ENCODE measurements at regions of chr10 and their contacts with region 1.

Region 1: DNA sequence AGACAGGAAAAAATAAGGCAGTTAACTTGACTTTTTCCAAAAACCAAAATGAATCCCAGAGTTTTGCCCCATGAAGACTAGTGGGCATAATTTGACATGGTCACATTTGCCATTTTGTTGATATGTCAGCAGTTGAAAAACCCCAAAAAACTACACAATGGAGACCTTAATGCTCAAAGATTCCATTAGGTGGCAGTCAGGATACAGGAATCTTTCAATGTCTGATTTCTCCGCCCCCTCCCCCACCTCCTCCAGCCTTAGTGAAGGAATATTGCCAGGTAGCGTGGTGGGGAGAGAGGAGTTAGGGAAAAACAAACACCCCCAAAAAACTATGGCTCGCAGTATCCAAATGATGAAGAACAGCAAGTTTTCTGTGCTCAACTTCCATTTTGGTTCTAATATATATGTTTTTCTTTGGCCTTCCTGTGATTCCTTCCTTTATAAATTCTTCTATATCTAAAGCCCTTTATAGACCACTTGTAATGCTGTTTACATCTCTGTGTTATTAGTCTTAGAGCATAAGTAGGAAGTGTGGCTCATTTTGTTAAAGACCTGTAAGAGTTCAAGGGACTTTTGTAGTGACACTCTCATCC is 6.7 kb upstream of the SMNDC1 start:
- DNase-seq: no peak
- H3K4me3 ChIP-seq: no peak overlapping the region
- H3K27ac ChIP-seq: no peak overlapping the region
- H3K4me1 ChIP-seq: peaks cover 0 to 12% (median 3%) of the 10 kb centered on the region in 3 donors
- H3K27me3 ChIP-seq: peaks cover 0 to 6% (median 0%) of the 10 kb centered on the region in 4 donors
- CTCF ChIP-seq: peak; percentile 44 to 78 (median 62)
- POLR2A ChIP-seq: no peak

Region 2: GRCh38 chr10:110225756-110226542 is 85.5 kb before region 1 on chr10:
- intact Hi-C with region 1: no loop called
- DNase-seq: peak; percentile 53
- H3K4me3 ChIP-seq: peak overlapping the region; percentile 62 to 96 (median 72)
- H3K27ac ChIP-seq: peak overlapping the region; percentile 85 to 98 (median 94)
- H3K4me1 ChIP-seq: peaks cover 16 to 56% (median 29%) of the 10 kb centered on the region in 3 donors
- H3K27me3 ChIP-seq: no peaks in the 10 kb centered on the region
- CTCF ChIP-seq: peak; percentile 30 to 90 (median 64)
- POLR2A ChIP-seq: peak in 2 of 4 donors; percentile 41 to 43

Region 3: DNA sequence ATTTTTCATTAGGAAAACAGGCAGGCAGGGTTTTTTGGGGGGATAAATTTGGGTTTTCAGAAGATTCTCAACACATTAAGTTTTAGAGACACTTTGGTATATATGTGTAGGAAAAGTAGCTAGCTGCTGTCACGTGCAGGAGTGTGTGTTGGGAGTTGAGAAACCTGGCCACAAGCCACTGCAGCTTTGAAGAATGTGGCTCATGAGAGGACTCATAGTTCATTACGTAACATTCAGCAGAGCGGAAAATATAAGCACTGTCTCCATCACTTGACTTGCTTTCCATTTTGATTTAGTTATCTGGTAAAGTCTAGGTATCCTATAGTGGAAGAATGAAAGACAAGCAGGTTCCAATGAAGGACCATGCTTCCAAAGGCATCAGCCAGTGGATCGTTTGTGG is 38.0 kb before region 1 on chr10:
- intact Hi-C with region 1: no loop called
- DNase-seq: no peak
- H3K4me3 ChIP-seq: no peak overlapping the region
- H3K27ac ChIP-seq: peak overlapping the region in 3 of 4 donors; percentile 6 to 15 (median 8)
- H3K4me1 ChIP-seq: peaks cover 0 to 44% (median 14%) of the 10 kb centered on the region in 3 donors
- H3K27me3 ChIP-seq: no peaks in the 10 kb centered on the region
- CTCF ChIP-seq: no peak
- POLR2A ChIP-seq: no peak

Region 4: DNA sequence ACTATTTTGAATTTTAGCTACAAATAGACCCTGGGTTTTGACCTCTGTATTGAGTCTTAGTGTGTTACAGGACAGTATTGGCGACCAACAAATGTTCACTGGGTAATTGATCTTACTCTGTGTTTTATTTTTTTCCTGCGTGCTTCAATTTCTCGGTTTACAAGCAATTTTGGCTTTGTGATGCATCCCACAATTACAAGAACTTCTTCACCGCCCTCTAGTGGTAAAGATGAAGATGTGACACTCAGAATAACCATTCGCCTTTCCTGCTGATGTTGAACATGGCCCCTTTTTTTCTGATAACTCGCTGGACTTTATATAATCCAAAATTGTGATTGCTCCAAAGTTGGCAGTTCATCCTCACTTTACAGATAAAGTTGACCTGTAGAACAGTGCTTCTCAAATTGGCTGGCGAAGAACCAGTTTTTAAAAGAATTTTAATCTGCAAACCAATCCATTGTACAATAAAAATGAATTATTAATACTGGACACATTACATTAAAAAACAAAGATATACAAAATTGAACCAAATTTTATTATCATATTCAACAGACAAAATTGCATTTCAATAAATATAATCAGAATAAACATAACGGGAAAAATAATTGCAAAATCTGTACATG is 235.8 kb after region 1 on chr10:
- intact Hi-C with region 1: loop called (anchors 5 kb)
- DNase-seq: no peak
- H3K4me3 ChIP-seq: no peak overlapping the region
- H3K27ac ChIP-seq: no peak overlapping the region
- H3K4me1 ChIP-seq: peaks cover 0 to 6% (median 0%) of the 10 kb centered on the region in 3 donors
- H3K27me3 ChIP-seq: peaks cover 0 to 35% (median 0%) of the 10 kb centered on the region in 4 donors
- CTCF ChIP-seq: peak; percentile 66 to 86 (median 80)
- POLR2A ChIP-seq: no peak

Region 5: GRCh38 chr10:110657968-110658691 is 346.7 kb after region 1 on chr10:
- intact Hi-C with region 1: no loop called
- DNase-seq: no peak
- H3K4me3 ChIP-seq: no peak overlapping the region
- H3K27ac ChIP-seq: no peak overlapping the region
- H3K4me1 ChIP-seq: no peaks in the 10 kb centered on the region
- H3K27me3 ChIP-seq: peaks cover 0 to 9% (median 0%) of the 10 kb centered on the region in 4 donors
- CTCF ChIP-seq: no peak
- POLR2A ChIP-seq: no peak

Measured in esophagus squamous epithelium (tissue), 5 donors.